Activated T-helper 1 cell treated with anti-CD3 and anti-CD28 coated beads, Interleukin-12 subunit alpha, Interleukin-12 subunit beta, Interleukin-2, Interleukin-4 antibody, amounts not matched to agents 30 ng/mL and 10 ng/mL and 1 ng/mL, durations not matched to agents 14 hours and 24 hours and 36 hours (primary cell): ENCODE measurements at regions of chr7 and their contacts with region 1.

Region 1: DNA sequence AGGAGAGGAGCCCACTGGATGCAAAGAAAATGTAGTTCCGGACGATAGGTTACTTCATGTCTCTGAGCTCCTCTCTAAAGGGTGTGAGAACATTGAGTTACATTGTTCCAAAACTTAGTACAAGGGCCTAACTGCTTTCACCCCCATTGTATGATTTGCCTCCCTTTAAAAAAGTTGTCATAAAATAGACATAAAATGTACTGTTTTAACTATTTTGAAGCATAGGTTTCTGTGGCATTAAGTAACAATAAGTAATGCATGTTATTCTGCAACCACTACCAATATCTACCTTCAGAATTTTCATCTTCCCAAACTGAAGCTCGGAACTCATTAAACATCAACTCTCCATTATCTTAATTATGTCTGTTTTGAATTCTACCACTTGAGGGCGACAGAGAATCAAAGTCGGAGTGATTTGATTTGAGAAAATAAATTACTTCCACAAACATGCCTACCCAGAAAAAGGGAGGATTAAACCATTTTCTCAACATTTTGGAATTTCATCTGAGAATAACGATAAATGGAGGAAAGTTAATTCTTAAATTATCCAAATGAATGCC is 2.7 kb downstream of the IGFBP1 start:
- DNase-seq: no peak
- H3K4me3 Mint-ChIP-seq: no peak overlapping the region
- H3K27ac Mint-ChIP-seq: no peak overlapping the region
- H3K4me1 Mint-ChIP-seq: no peaks in the 10 kb centered on the region
- H3K27me3 Mint-ChIP-seq: peaks cover 47% of the 10 kb centered on the region

Region 2: GRCh38 chr7:46682836-46683624 is 792.0 kb after region 1 on chr7:
- intact Hi-C with region 1: no loop called
- DNase-seq: no peak
- H3K4me3 Mint-ChIP-seq: no peak overlapping the region
- H3K27ac Mint-ChIP-seq: no peak overlapping the region
- H3K4me1 Mint-ChIP-seq: no peaks in the 10 kb centered on the region
- H3K27me3 Mint-ChIP-seq: no peaks in the 10 kb centered on the region

Region 3: DNA sequence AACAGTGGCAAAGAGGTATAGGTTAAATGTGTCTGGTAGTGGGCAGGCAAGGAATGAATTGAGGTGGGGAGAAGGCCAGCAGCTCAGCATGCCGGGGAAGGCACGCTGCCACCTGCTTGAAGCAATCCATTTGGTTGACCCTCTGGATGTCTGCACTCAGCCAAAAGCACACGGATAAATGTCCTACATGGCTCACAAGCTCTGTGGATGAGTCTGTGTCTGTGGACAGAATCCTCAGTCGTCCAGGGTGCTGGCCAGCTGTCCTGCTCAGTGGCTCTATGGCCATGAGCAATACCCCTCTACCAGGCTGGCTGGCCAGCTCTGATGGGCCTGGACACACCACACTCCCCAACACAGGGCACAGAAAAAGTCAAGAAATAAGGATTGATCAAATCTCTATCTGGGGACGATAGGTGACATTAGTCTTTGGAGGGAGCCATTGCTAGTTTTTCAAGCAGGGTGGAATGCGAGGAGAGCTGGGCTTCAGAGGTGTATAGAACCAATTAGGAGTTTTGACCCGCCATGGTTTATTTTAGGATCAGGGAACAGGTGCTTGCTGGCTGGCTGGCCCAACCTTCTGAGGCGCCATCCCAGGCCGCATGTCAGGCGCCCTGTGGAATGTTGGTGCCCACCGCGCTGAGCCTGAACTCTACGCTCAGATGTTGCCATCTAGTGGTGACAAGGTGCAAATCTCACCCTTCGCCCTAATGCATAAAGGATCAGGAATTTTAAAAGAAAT is 1197.5 kb after region 1 on chr7:
- intact Hi-C with region 1: loop called (anchors 1 kb)
- DNase-seq: no peak
- H3K4me3 Mint-ChIP-seq: no peak overlapping the region
- H3K27ac Mint-ChIP-seq: no peak overlapping the region
- H3K4me1 Mint-ChIP-seq: no peaks in the 10 kb centered on the region
- H3K27me3 Mint-ChIP-seq: no peaks in the 10 kb centered on the region